ENCODE measurements at regions of chr17 and their contacts with region 1.

Region 1: DNA sequence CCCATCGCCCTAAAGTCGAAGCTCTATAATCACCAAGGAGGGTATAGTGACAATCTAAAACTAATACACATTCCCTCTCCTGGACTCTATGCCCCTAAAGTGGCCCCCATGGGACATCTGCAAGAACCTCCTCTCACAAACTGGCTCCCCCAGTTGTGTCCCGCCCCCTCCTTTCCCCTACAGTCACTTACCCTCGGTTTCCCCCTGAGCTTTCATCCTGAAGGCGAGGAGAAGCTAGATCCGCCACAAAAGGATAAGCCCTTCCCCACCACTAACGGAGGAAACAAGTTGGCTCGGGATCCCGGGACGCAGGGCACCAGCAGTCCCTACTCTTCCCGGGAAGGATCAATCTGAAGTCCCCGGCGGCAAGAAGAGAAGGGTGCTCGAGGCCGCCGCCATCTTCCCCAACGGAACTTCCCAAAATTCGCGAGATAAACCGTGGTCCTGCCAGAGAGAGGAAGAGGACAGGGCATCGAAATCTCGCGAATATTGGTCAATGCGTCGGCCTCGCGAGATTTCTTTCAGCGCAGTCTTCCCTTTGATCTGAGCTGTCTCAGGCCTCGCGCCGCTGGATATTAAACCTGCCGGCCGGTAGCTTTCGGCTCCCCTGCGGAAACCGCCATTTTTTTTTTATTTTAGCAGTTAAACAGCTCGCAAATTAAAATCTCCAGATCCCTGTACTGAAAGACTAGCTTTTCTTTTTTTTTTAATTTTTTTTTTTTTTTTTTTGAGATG is at the start of gene MED1:
- DNase-seq: peak; percentile 90 to 92
- H3K4me3 ChIP-seq: peak within 1 kb of the TSS; percentile 95
- H3K27ac ChIP-seq: peak within 1 kb of the TSS; percentile 82
- H3K4me1 ChIP-seq: peaks cover 6% of the 10 kb centered on the region
- H3K27me3 ChIP-seq: no peaks in the 10 kb centered on the region
- CTCF ChIP-seq: no peak
- total RNA-seq, gene MED1: 23.2 and 35.7 TPM in 2 replicates

Region 2: DNA sequence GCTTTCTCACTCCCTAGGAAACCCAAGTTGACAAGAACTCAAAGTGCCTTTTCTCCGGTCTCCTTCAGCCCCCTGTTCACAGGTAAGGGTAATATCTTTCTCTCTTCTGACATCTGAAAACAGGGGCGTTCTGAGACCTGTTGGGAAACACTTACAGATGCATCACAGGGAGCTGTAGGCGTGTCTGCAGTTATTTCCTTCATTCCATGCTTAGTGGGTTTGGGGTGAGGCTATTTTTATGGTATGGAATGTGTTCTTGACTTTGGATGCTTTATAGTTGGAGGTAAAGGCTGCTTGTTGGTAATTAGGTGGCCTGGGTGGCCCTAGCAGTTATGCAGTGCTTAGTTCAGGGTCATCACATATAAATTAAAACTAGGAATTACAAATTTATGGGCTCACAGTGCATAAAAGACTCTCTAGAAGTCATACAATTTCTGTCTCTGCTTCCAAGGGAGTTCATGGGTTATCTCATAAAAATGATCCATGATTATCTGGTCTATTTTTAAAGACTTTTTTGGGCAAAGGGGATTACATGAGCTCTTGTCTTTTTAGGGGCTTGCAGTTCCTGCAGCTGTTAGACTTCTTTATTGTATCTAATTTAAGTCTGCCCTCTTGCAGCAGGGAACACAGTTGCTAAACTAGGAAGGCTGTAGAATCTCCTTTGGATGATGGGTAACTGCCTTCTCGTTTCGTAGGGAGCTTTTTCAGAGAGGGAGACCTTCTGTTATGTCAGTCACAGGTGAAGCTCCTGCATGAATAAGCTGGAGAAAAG is 1089.1 kb before region 1 on chr17:
- CTCF ChIA-PET with region 1: no interaction called
- POLR2A ChIA-PET with region 1: interaction called, 16 read pairs
- intact Hi-C with region 1: no loop called
- DNase-seq: peak; percentile 12 to 84
- H3K4me3 ChIP-seq: no peak overlapping the region
- H3K27ac ChIP-seq: peak overlapping the region; percentile 46
- H3K4me1 ChIP-seq: peaks cover 19% of the 10 kb centered on the region
- H3K27me3 ChIP-seq: no peaks in the 10 kb centered on the region
- CTCF ChIP-seq: no peak

Region 3: DNA sequence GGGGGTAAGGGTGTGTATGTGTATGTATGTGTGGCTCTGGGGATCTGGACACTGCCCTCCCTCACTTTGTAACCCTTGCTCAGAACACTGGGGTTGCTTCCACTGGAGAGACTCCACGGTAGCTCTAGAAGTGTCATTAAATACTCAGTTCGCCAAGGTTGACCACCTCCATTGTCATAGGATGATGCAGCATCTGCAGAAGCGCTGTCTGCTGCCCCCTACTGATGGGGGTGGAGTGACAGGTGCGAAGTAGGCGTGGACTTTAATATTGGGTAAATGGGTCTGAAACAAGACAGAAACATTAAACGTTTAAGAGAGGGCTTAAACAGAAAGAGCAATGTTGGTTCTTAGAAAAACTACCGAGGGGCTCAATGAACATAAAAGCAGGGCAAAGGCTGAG is 189.7 kb before region 1 on chr17:
- CTCF ChIA-PET with region 1: no interaction called
- POLR2A ChIA-PET with region 1: interaction called, 24 read pairs
- intact Hi-C with region 1: no loop called
- DNase-seq: no peak
- H3K4me3 ChIP-seq: no peak overlapping the region
- H3K27ac ChIP-seq: no peak overlapping the region
- H3K4me1 ChIP-seq: no peaks in the 10 kb centered on the region
- H3K27me3 ChIP-seq: no peaks in the 10 kb centered on the region
- CTCF ChIP-seq: peak; percentile 41; the same call in 1 of the 2 replicates

Region 4: GRCh38 chr17:39401412-39402243 is 49.4 kb before region 1 on chr17 and contains the start of gene FBXL20:
- CTCF ChIA-PET with region 1: no interaction called
- POLR2A ChIA-PET with region 1: no interaction called
- intact Hi-C with region 1: no loop called
- DNase-seq: peak; percentile 74 to 85
- H3K4me3 ChIP-seq: peak within 1 kb of the TSS; percentile 66
- H3K27ac ChIP-seq: no peak within 1 kb of the TSS
- H3K4me1 ChIP-seq: peaks cover 32% of the 10 kb centered on the region
- H3K27me3 ChIP-seq: no peaks in the 10 kb centered on the region
- CTCF ChIP-seq: no peak
- total RNA-seq, gene FBXL20: 18.8 and 20.2 TPM in 2 replicates

Region 5: DNA sequence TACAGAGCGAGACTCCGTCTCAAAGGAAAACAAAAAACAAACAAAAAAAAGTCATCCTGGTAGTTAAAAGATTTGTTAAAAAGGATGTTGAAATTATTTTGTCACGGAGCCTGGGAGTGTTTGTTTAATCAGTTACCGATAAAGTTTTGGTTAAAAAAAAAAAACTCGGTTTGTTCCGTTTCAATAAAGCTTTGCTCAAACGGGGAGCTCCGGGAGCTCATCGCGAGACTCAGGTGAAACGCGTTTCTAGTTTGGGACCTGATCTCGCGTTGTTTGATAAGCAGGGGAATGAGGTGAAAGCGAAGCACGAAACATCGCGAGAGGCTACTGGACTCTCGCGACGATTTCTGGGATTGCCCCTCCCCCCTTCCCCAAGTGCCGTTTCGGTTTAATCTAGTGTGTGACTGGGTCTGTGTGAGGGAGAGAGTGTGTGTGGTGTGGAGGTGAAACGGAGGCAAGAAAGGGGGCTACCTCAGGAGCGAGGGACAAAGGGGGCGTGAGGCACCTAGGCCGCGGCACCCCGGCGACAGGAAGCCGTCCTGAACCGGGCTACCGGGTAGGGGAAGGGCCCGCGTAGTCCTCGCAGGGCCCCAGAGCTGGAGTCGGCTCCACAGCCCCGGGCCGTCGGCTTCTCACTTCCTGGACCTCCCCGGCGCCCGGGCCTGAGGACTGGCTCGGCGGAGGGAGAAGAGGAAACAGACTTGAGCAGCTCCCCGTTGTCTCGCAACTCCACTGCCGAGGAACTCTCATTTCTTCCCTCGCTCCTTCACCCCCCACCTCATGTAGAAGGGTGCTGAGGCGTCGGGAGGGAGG is 10.3 kb after region 1 on chr17 and contains the start of gene CDK12:
- CTCF ChIA-PET with region 1: interaction called, 3 read pairs
- POLR2A ChIA-PET with region 1: interaction called, 36 read pairs
- intact Hi-C with region 1: loop called (anchors 1 kb)
- DNase-seq: peak; percentile 92 to 98
- H3K4me3 ChIP-seq: peak within 1 kb of the TSS; percentile 98
- H3K27ac ChIP-seq: peak within 1 kb of the TSS; percentile 94
- H3K4me1 ChIP-seq: peaks cover 19% of the 10 kb centered on the region
- H3K27me3 ChIP-seq: no peaks in the 10 kb centered on the region
- CTCF ChIP-seq: no peak
- total RNA-seq, gene CDK12: 48.5 and 64.3 TPM in 2 replicates

Region 6: GRCh38 chr17:39668199-39668966 is 217.4 kb after region 1 on chr17 and contains the start of gene PNMT:
- CTCF ChIA-PET with region 1: no interaction called
- POLR2A ChIA-PET with region 1: no interaction called
- intact Hi-C with region 1: no loop called
- DNase-seq: peak in 1 of 2 experiments; percentile 58
- H3K4me3 ChIP-seq: peak within 1 kb of the TSS; percentile 51
- H3K27ac ChIP-seq: no peak within 1 kb of the TSS
- H3K4me1 ChIP-seq: peaks cover 35% of the 10 kb centered on the region
- H3K27me3 ChIP-seq: no peaks in the 10 kb centered on the region
- CTCF ChIP-seq: peak; percentile 63; the same call in 1 of the 2 replicates
- total RNA-seq, gene PNMT: 0.75 and 1.1 TPM in 2 replicates

Measured in PC-9 (cell line).